Activated B cell treated with CpG ODN at 0.5 μM for 24 hours (primary cell): ENCODE measurements at regions of chrX and their contacts with region 1.

Region 1: GRCh38 chrX:100928660-100929613 is at the start of gene XKRX:
- DNase-seq: peak; percentile 23
- ATAC-seq: peak; percentile 71
- H3K4me3 Mint-ChIP-seq: peak within 1 kb of the TSS; percentile 94
- H3K27ac Mint-ChIP-seq: peak within 1 kb of the TSS; percentile 82
- H3K4me1 Mint-ChIP-seq: peaks cover 62% of the 10 kb centered on the region
- H3K27me3 Mint-ChIP-seq: no peaks in the 10 kb centered on the region
- CTCF ChIP-seq: no peak
- total RNA-seq, gene XKRX: 2.0 and 2.2 TPM in 2 replicates

Region 2: GRCh38 chrX:100829730-100830129 is 99.2 kb before region 1 on chrX:
- CTCF ChIA-PET with region 1: no interaction called
- POLR2A ChIA-PET with region 1: interaction called, 4 read pairs
- intact Hi-C with region 1: loop called (anchors 5 kb)
- DNase-seq: no peak
- ATAC-seq: peak; percentile 88
- H3K4me3 Mint-ChIP-seq: peak overlapping the region; percentile 53
- H3K27ac Mint-ChIP-seq: peak overlapping the region; percentile 88
- H3K4me1 Mint-ChIP-seq: peaks cover 11% of the 10 kb centered on the region
- H3K27me3 Mint-ChIP-seq: no peaks in the 10 kb centered on the region
- CTCF ChIP-seq: no peak

Region 3: DNA sequence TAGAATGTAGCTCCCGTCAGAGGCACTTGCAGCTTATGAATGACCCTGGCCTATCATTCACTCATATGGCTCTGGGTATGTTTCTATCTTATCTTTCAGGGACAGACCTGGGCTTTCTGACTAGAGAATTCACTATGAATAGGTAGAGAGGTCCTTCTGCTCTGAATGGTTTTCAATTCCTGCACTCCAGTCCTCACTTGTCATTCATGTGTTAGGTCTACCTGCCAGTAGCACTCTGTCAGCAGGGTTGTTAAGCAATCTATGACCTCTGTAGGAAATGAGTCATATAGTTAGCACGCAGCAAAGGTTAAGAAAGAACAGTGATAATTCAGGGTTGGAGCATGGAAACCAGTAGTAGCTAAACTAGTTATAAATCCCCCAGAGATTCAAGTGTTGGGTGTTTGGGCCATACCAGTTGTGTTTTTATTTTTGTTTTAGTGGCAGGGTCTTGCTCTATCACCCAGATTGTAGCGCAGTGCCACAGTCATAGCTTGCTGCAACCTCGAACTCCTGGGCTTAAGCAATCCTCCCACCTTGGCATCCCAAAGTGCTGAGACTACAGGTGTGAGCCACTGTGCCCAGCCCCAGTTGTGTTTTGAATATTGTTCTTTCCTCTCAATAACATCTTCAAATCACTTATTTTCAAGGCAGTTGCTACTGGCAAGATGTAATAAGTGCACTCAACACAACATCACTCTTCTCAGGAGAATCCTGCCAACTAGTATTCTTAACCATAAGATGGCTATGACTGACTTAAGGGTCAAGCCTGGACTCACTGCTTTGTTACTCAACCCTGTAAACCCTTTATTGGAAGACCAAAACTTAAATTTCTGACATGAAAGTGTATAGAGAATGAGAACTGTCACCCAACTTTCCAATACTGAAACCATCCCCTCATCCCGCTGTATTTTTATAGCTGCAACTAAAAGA is 65.7 kb after region 1 on chrX:
- CTCF ChIA-PET with region 1: no interaction called
- POLR2A ChIA-PET with region 1: no interaction called
- intact Hi-C with region 1: loop called (anchors 5 kb)
- DNase-seq: no peak
- ATAC-seq: no peak
- H3K4me3 Mint-ChIP-seq: no peak overlapping the region
- H3K27ac Mint-ChIP-seq: no peak overlapping the region
- H3K4me1 Mint-ChIP-seq: peaks cover 5% of the 10 kb centered on the region
- H3K27me3 Mint-ChIP-seq: no peaks in the 10 kb centered on the region
- CTCF ChIP-seq: no peak

Region 4: GRCh38 chrX:101097546-101098453 is 168.9 kb after region 1 on chrX and contains the start of gene CENPI:
- CTCF ChIA-PET with region 1: no interaction called
- POLR2A ChIA-PET with region 1: interaction called, 9 read pairs
- intact Hi-C with region 1: loop called (anchors 5 kb)
- DNase-seq: peak; percentile 78
- ATAC-seq: peak; percentile 99
- H3K4me3 Mint-ChIP-seq: peak within 1 kb of the TSS; percentile 86
- H3K27ac Mint-ChIP-seq: peak within 1 kb of the TSS; percentile 91
- H3K4me1 Mint-ChIP-seq: peaks cover 9% of the 10 kb centered on the region
- H3K27me3 Mint-ChIP-seq: no peaks in the 10 kb centered on the region
- CTCF ChIP-seq: no peak
- total RNA-seq, gene CENPI: 2.6 and 3.1 TPM in 2 replicates